Sigmoid colon (tissue), 7 donors: ENCODE measurements at regions of chr13 and their contacts with region 1.

Region 1: GRCh38 chr13:74133657-74134201 is 475 bp downstream of the KLF12 start:
- DNase-seq: peak; percentile 95
- H3K4me3 ChIP-seq: peak overlapping the region; percentile 61 to 97 (median 82)
- H3K27ac ChIP-seq: peak overlapping the region; percentile 87 to 98 (median 96)
- H3K4me1 ChIP-seq: peaks cover 0 to 41% (median 22%) of the 10 kb centered on the region in 4 donors
- H3K27me3 ChIP-seq: no peaks in the 10 kb centered on the region
- CTCF ChIP-seq: no peak
- EP300 ChIP-seq: no peak
- POLR2A ChIP-seq: peak in 1 of 2 donors; percentile 53

Region 2: GRCh38 chr13:73765651-73766384 is 367.9 kb before region 1 on chr13:
- intact Hi-C with region 1: loop called (anchors 5 kb)
- DNase-seq: peak; percentile 91
- H3K4me3 ChIP-seq: peak overlapping the region in 1 of 4 donors; percentile 18
- H3K27ac ChIP-seq: peak overlapping the region; percentile 62 to 81 (median 72)
- H3K4me1 ChIP-seq: peaks cover 0 to 48% (median 36%) of the 10 kb centered on the region in 4 donors
- H3K27me3 ChIP-seq: no peaks in the 10 kb centered on the region
- CTCF ChIP-seq: no peak
- EP300 ChIP-seq: no peak
- POLR2A ChIP-seq: no peak

Region 3: GRCh38 chr13:73835138-73835721 is 298.5 kb before region 1 on chr13:
- intact Hi-C with region 1: loop called (anchors 5 kb)
- DNase-seq: no peak
- H3K4me3 ChIP-seq: no peak overlapping the region
- H3K27ac ChIP-seq: no peak overlapping the region
- H3K4me1 ChIP-seq: peaks cover 0 to 26% (median 20%) of the 10 kb centered on the region in 4 donors
- H3K27me3 ChIP-seq: no peaks in the 10 kb centered on the region
- CTCF ChIP-seq: peak; percentile 48 to 74 (median 68)
- EP300 ChIP-seq: no peak
- POLR2A ChIP-seq: no peak

Region 4: GRCh38 chr13:73913053-73913740 is 220.5 kb before region 1 on chr13:
- intact Hi-C with region 1: loop called (anchors 10 kb)
- DNase-seq: no peak
- H3K4me3 ChIP-seq: peak overlapping the region in 1 of 4 donors; percentile 1
- H3K27ac ChIP-seq: peak overlapping the region; percentile 48 to 70 (median 66)
- H3K4me1 ChIP-seq: peaks cover 0 to 42% (median 39%) of the 10 kb centered on the region in 4 donors
- H3K27me3 ChIP-seq: no peaks in the 10 kb centered on the region
- CTCF ChIP-seq: no peak
- EP300 ChIP-seq: no peak
- POLR2A ChIP-seq: no peak

Region 5: GRCh38 chr13:74062933-74063332 is 70.8 kb before region 1 on chr13:
- intact Hi-C with region 1: loop called (anchors 5 kb)
- DNase-seq: peak; percentile 82
- H3K4me3 ChIP-seq: peak overlapping the region; percentile 0 to 38 (median 31)
- H3K27ac ChIP-seq: peak overlapping the region; percentile 14 to 82 (median 76)
- H3K4me1 ChIP-seq: peaks cover 0 to 51% (median 40%) of the 10 kb centered on the region in 4 donors
- H3K27me3 ChIP-seq: no peaks in the 10 kb centered on the region
- CTCF ChIP-seq: no peak
- EP300 ChIP-seq: no peak
- POLR2A ChIP-seq: no peak

Region 6: GRCh38 chr13:74074723-74075122 is 59.0 kb before region 1 on chr13:
- intact Hi-C with region 1: loop called (anchors 5 kb)
- DNase-seq: no peak
- H3K4me3 ChIP-seq: no peak overlapping the region
- H3K27ac ChIP-seq: peak overlapping the region in 2 of 4 donors; percentile 1 to 20
- H3K4me1 ChIP-seq: peaks cover 0 to 58% (median 35%) of the 10 kb centered on the region in 4 donors
- H3K27me3 ChIP-seq: no peaks in the 10 kb centered on the region
- CTCF ChIP-seq: no peak
- EP300 ChIP-seq: no peak
- POLR2A ChIP-seq: no peak

Region 7: GRCh38 chr13:74287724-74288169 is 154.0 kb after region 1 on chr13:
- intact Hi-C with region 1: loop called (anchors 2 kb)
- DNase-seq: peak; percentile 87
- H3K4me3 ChIP-seq: peak overlapping the region in 3 of 4 donors; percentile 21 to 32 (median 32)
- H3K27ac ChIP-seq: peak overlapping the region in 3 of 4 donors; percentile 25 to 78 (median 60)
- H3K4me1 ChIP-seq: peaks cover 0 to 50% (median 39%) of the 10 kb centered on the region in 4 donors
- H3K27me3 ChIP-seq: no peaks in the 10 kb centered on the region
- CTCF ChIP-seq: no peak
- EP300 ChIP-seq: no peak
- POLR2A ChIP-seq: no peak